Dorsolateral prefrontal cortex (tissue), 120 donors: ENCODE measurements at regions of chr4 and their contacts with region 1.

Region 1: GRCh38 chr4:145618932-145619638 is at the start of gene MMAA:
- DNase-seq: peak; percentile 85 to 96 (median 90)
- H3K4me3 ChIP-seq: peak within 1 kb of the TSS; percentile 62 to 95 (median 83)
- H3K27ac ChIP-seq: peak within 1 kb of the TSS; percentile 52 to 95 (median 88)
- H3K27me3 ChIP-seq: no peaks in the 10 kb centered on the region
- CTCF ChIP-seq: peak; percentile 47 to 93 (median 71)
- total RNA-seq, gene MMAA: 4.6 to 14.0 (median 8.6) TPM

Region 2: DNA sequence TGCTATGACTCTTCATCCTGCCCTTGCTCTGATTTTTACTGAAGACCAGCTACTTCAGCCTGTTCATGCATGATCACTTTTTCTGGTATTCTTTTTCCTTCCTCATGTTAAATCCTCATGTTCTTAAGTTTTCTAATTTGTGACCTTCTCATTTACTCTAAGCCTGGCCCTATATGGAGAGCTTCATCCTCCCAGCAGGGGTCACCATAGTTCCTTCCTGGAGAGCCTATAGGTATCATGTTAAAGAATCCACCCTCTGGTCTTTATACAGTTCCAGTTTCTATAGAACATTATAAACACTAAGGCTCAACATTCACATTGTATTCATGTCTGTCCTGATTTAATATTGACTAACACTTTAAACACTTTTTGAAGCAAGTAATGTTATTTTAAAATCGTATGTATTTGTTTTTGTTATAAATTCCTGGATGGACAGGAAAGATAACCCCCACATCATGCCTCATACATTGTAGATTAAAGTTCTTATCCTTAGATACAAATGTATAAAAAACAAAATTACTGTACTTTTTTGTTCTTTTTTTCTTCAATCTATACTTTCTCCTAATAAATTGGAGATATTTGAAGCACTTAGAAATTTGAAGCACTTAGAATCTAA is 384.9 kb before region 1 on chr4:
- intact Hi-C with region 1: loop called (anchors 5 kb)
- DNase-seq: peak in 7 of 10 donors; percentile 9 to 60 (median 45)
- H3K4me3 ChIP-seq: no peak overlapping the region
- H3K27ac ChIP-seq: no peak overlapping the region
- H3K27me3 ChIP-seq: peaks cover 0 to 3% (median 0%) of the 10 kb centered on the region in 45 donors
- CTCF ChIP-seq: peak; percentile 19 to 85 (median 69)

Region 3: DNA sequence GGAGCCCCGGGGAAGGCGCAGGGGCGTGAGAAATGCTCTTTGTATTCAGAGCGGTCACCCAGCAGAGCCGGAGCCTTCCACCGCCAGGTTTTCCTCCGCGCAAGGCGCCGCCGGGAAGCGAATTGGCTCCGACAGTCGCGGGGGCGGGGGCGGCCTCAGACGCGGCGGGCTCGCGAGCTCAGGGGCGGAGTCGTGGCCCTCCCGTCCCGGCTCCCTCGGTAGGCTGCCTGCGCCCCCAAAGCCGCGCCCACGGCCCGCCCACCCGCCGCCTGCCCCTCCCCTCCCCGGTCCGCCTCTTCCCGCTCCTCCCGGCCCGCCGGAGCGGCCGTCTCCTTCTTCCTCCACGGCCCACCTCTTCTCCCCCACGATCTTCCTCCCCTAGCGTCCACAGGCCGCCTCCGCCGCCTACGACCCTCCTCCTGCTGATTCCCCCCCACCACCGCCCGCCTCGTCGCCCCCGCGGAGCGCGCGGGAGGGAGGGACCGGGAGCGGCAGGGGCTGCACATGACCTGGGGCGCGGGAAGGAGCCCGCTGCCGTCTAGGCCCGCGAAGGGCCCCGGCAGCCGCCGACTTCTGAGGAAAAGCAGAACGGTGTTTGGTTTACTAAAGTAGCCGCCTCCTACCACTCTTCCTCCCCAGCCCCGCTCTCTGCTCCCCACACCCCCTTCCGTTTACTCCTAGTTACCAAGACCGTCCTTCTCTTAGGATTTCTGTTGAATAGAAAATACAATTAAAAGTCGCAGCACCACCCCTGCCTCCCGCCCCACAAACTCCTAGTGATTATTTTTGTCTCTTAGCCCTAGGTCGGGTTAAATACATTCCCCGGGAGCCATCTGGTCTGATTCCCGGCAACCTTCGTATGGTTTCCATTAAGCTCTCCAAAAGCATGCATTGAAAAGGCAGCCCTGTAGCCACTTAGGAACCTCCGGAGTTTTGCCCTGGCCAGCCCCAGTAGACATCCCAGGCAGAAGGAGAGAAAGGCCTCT is 114.1 kb after region 1 on chr4:
- intact Hi-C with region 1: loop called (anchors 2 to 5 kb)
- DNase-seq: peak; percentile 88 to 97 (median 92)
- H3K4me3 ChIP-seq: peak overlapping the region; percentile 40 to 90 (median 69)
- H3K27ac ChIP-seq: peak overlapping the region; percentile 79 to 98 (median 94)
- H3K27me3 ChIP-seq: no peaks in the 10 kb centered on the region
- CTCF ChIP-seq: peak in 45 of 56 donors; percentile 1 to 59 (median 34)

Region 4: GRCh38 chr4:145887241-145887991 is 268.3 kb after region 1 on chr4:
- intact Hi-C with region 1: loop called in 1 of 2 experiments (anchors 10 kb)
- DNase-seq: no peak
- H3K4me3 ChIP-seq: no peak overlapping the region
- H3K27ac ChIP-seq: peak overlapping the region in 46 of 59 donors; percentile 7 to 97 (median 59)
- H3K27me3 ChIP-seq: no peaks in the 10 kb centered on the region
- CTCF ChIP-seq: peak in 41 of 56 donors; percentile 10 to 62 (median 38)

Region 5: DNA sequence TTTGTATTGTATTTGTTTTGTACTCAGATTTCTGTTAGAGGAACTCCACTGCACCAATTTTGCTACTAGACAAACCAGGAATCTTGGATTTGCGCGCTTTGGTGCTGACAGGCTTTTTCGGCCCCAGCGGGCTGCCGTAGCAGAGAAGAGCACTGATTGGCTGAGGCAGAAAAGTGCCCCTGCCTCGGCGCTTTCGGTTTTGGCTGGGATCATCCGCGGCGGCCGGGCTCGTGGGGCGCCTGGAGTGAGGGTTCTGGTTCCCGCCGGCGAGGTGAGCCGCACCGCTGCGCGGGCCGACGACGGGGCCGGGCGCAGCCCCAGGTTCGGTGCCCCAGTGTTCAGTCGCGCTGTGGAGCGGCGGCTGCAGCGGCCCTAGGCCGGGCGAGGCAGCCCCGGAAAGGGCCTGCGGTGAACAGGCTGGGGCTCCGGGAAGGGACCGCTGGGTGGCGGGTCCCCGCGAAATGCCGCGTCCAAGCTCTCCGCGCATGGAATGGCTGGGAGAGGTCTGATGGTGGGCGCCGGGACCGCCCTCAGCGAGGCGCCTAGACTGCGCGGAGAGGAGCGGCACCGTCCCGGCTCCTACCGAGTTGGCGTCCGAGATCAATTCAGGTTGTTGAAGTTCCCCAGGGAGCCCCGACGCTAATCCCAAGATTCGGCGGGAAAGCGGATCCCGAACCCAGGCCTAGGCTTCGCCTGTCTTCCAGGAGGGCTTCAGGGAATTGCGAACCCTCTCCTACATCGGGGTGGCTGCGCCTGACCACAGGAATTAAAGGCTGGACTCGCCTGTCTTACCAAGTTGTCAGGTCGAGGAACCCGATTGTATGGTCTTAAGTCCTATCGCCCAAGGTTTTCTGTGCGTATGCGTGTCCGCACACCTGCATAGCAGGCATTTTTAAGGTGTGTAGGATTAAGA is 556.7 kb after region 1 on chr4 and contains the start of gene LSM6:
- intact Hi-C with region 1: loop called in 1 of 2 experiments (anchors 10 kb)
- DNase-seq: peak; percentile 86 to 94 (median 92)
- H3K4me3 ChIP-seq: peak within 1 kb of the TSS; percentile 66 to 100 (median 91)
- H3K27ac ChIP-seq: peak within 1 kb of the TSS; percentile 56 to 97 (median 91)
- H3K27me3 ChIP-seq: no peaks in the 10 kb centered on the region
- CTCF ChIP-seq: peak in 41 of 56 donors; percentile 13 to 57 (median 38)
- total RNA-seq, gene LSM6: 14.6 to 47.4 (median 24.5) TPM